B cell (primary cell): ENCODE measurements at regions of chr1 and their contacts with region 1.

Region 1: DNA sequence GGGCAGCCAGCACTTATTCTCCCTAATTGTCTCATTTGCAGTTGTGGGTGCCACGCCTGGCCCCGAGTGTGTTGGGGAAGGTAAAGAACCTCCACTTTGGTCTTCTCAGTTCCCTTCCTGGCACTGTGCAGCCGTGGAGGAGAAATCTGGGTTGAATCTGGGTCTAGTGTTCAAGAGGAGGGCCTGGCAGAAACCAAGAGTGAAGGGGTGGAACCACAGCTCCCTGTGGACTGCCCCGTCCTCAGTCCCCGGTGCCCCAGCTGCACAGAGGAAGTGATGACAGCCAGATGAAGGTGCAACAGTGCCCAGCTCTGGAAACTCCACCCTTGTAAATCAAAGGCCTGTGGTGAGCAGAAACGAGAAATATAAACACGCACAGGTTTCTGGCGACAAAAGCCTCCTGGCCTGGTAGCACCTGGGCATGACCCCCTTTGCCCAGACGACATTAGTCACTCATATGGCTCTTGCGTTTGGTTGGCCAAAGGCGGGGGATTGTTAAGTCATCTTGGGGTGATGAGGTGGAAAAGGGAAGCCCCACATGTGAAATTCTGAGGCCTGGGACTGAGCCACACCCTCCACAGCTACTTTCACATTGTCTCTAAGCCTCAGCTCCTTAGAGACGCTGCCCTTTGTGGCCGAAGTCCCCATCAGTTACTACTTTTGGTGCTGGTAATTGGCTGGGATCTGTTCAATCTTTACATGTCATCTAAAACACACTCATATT is 4.2 kb upstream of the ECE1 start:
- DNase-seq: peak; percentile 97
- ATAC-seq: peak; percentile 71
- H3K4me3 ChIP-seq: peak overlapping the region; percentile 48 to 75 (median 61)
- H3K4me3 Mint-ChIP-seq: peak overlapping the region; percentile 87
- H3K27ac ChIP-seq: peak overlapping the region; percentile 96 to 99
- H3K27ac Mint-ChIP-seq: peak overlapping the region; percentile 95
- H3K4me1 ChIP-seq: peaks cover 77 to 90% of the 10 kb centered on the region in 2 donors
- H3K4me1 Mint-ChIP-seq: peaks cover 85% of the 10 kb centered on the region
- H3K27me3 ChIP-seq: no peaks in the 10 kb centered on the region
- H3K27me3 Mint-ChIP-seq: no peaks in the 10 kb centered on the region
- CTCF ChIP-seq: no peak

Region 2: GRCh38 chr1:20981915-20982314 is 312.5 kb before region 1 on chr1:
- CTCF ChIA-PET with region 1: no interaction called
- POLR2A ChIA-PET with region 1: no interaction called
- intact Hi-C with region 1: no loop called
- DNase-seq: no peak
- ATAC-seq: no peak
- H3K4me3 ChIP-seq: no peak overlapping the region
- H3K4me3 Mint-ChIP-seq: no peak overlapping the region
- H3K27ac ChIP-seq: peak overlapping the region in 1 of 2 donors; percentile 41
- H3K27ac Mint-ChIP-seq: no peak overlapping the region
- H3K4me1 ChIP-seq: no peaks in the 10 kb centered on the region
- H3K4me1 Mint-ChIP-seq: no peaks in the 10 kb centered on the region
- H3K27me3 ChIP-seq: no peaks in the 10 kb centered on the region
- H3K27me3 Mint-ChIP-seq: no peaks in the 10 kb centered on the region
- CTCF ChIP-seq: no peak

Region 3: DNA sequence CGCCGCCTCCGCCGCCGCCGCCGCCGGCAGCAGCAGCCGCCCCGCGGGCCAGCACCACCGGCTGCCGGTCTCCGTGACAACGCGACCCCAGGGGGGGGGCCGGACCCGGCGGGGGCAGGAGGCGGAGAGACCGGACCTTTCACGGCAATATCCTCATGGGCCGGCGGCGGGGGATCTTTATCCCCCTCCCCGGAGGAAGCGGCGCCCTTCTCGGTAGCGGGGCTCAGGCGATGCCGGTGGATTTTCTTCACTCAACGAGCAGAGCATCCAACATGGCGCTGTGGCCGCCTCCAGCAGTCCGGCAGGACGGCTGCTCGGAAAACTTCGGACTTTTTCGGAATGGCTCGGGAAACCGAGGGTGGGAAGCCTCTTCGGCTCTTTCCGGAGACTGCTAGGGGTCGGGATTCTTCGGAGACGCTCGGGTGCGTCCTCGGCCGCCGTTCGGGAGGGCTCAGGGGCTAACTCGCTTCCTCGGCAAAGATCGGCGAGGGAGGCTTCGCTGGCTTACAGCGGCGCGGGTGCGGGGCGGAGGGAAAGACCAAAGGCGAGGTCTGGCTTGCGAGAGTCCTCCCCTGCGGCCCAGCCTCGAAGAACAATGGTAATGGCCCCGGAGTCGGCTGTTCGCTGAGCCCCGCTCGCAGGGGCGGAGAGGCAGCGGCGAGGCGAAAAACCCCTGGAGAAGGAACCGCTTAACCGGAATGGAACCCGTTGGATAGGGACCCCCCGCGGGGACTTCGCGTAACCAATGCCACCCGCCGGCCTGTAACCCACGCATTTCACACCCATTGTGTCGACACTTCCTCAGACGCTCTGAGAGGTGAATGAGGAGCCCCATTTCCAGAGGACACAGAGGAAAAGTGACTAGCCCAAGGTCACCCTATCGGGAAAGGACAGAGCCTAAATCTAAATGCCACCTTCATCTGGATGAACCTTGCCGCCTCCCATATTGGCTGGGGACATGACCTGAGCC is 117.6 kb before region 1 on chr1 and contains the start of gene EIF4G3:
- CTCF ChIA-PET with region 1: no interaction called
- POLR2A ChIA-PET with region 1: no interaction called
- intact Hi-C with region 1: loop called (anchors 1 kb)
- DNase-seq: peak; percentile 99
- ATAC-seq: peak; percentile 93
- H3K4me3 ChIP-seq: peak within 1 kb of the TSS; percentile 76 to 96 (median 83)
- H3K4me3 Mint-ChIP-seq: peak within 1 kb of the TSS; percentile 97
- H3K27ac ChIP-seq: peak within 1 kb of the TSS; percentile 73 to 89
- H3K27ac Mint-ChIP-seq: peak within 1 kb of the TSS; percentile 96
- H3K4me1 ChIP-seq: peaks cover 16 to 23% of the 10 kb centered on the region in 2 donors
- H3K4me1 Mint-ChIP-seq: peaks cover 29% of the 10 kb centered on the region
- H3K27me3 ChIP-seq: no peaks in the 10 kb centered on the region
- H3K27me3 Mint-ChIP-seq: no peaks in the 10 kb centered on the region
- CTCF ChIP-seq: no peak
- total RNA-seq, gene EIF4G3: 76.0 and 80.9 TPM in 2 replicates

Region 4: DNA sequence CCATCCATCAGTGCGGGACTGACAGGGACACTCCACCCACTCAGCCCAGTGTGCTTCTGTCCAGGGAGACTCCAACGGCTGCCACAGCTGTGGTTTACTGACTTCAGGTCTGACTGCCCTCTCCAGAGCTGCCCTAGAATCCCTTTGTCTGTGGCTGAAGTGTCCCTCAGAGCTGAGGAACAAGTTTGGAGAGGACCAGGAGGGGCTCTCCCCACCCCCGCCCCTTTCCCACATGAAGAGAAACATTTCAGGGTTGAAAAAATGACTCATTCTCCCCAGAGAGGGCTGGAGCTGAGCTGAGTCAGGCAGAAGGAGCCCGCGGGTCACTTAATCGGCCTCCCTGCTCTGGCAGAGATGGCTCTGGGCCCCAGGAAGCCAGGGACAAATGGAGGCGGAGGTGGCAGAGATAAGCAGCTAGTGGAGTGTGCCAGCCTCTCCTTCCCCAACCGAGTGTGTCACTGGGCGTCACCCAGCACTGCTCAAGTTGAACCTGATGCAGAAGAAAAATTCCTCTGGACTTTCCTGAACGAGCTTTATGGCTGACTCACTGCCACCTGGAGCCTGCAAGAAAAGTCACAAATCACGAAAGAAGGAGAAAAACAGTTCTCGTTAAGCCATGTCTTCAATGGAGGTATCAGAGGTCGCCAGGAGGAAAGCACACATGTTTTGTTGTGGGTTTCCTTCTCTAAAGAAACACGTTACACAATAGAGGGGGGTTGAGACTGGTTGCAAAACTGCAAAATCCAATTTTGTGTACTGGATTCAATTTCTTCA is 30.1 kb after region 1 on chr1:
- CTCF ChIA-PET with region 1: interaction called, 34 read pairs
- POLR2A ChIA-PET with region 1: interaction called, 30 read pairs
- intact Hi-C with region 1: loop called (anchors 1 kb)
- DNase-seq: peak; percentile 65
- ATAC-seq: peak; percentile 67
- H3K4me3 ChIP-seq: peak overlapping the region in 4 of 5 experiments; percentile 4 to 16 (median 14)
- H3K4me3 Mint-ChIP-seq: peak overlapping the region; percentile 81
- H3K27ac ChIP-seq: peak overlapping the region; percentile 63 to 64
- H3K27ac Mint-ChIP-seq: peak overlapping the region; percentile 93
- H3K4me1 ChIP-seq: peaks cover 50 to 56% of the 10 kb centered on the region in 2 donors
- H3K4me1 Mint-ChIP-seq: peaks cover 71% of the 10 kb centered on the region
- H3K27me3 ChIP-seq: no peaks in the 10 kb centered on the region
- H3K27me3 Mint-ChIP-seq: no peaks in the 10 kb centered on the region
- CTCF ChIP-seq: no peak

Region 5: GRCh38 chr1:21344750-21345443 is 50.5 kb after region 1 on chr1:
- CTCF ChIA-PET with region 1: interaction called, 7 read pairs
- POLR2A ChIA-PET with region 1: interaction called, 40 read pairs
- intact Hi-C with region 1: loop called (anchors 1 kb)
- DNase-seq: no peak
- ATAC-seq: peak; percentile 39
- H3K4me3 ChIP-seq: peak overlapping the region; percentile 60 to 84 (median 69)
- H3K4me3 Mint-ChIP-seq: peak overlapping the region; percentile 91
- H3K27ac ChIP-seq: peak overlapping the region; percentile 35 to 43
- H3K27ac Mint-ChIP-seq: peak overlapping the region; percentile 85
- H3K4me1 ChIP-seq: peaks cover 38 to 45% of the 10 kb centered on the region in 2 donors
- H3K4me1 Mint-ChIP-seq: peaks cover 39% of the 10 kb centered on the region
- H3K27me3 ChIP-seq: peaks cover 0 to 4% (median 0%) of the 10 kb centered on the region in 4 experiments
- H3K27me3 Mint-ChIP-seq: no peaks in the 10 kb centered on the region
- CTCF ChIP-seq: no peak

Region 6: GRCh38 chr1:21355956-21356355 is 61.5 kb after region 1 on chr1:
- CTCF ChIA-PET with region 1: no interaction called
- POLR2A ChIA-PET with region 1: no interaction called
- intact Hi-C with region 1: no loop called
- DNase-seq: no peak
- ATAC-seq: no peak
- H3K4me3 ChIP-seq: no peak overlapping the region
- H3K4me3 Mint-ChIP-seq: no peak overlapping the region
- H3K27ac ChIP-seq: no peak overlapping the region
- H3K27ac Mint-ChIP-seq: no peak overlapping the region
- H3K4me1 ChIP-seq: no peaks in the 10 kb centered on the region
- H3K4me1 Mint-ChIP-seq: no peaks in the 10 kb centered on the region
- H3K27me3 ChIP-seq: no peaks in the 10 kb centered on the region
- H3K27me3 Mint-ChIP-seq: no peaks in the 10 kb centered on the region
- CTCF ChIP-seq: no peak

Region 7: GRCh38 chr1:21520899-21521716 is 226.7 kb after region 1 on chr1:
- CTCF ChIA-PET with region 1: interaction called, 3 read pairs
- POLR2A ChIA-PET with region 1: interaction called, 4 read pairs
- intact Hi-C with region 1: loop called (anchors 2 kb)
- DNase-seq: no peak
- ATAC-seq: no peak
- H3K4me3 ChIP-seq: no peak overlapping the region
- H3K4me3 Mint-ChIP-seq: peak overlapping the region; percentile 37
- H3K27ac ChIP-seq: no peak overlapping the region
- H3K27ac Mint-ChIP-seq: peak overlapping the region; percentile 61
- H3K4me1 ChIP-seq: peaks cover 69 to 94% of the 10 kb centered on the region in 2 donors
- H3K4me1 Mint-ChIP-seq: peaks cover 78% of the 10 kb centered on the region
- H3K27me3 ChIP-seq: no peaks in the 10 kb centered on the region
- H3K27me3 Mint-ChIP-seq: no peaks in the 10 kb centered on the region
- CTCF ChIP-seq: no peak